Adrenal gland (tissue), 19 donors: ENCODE measurements at regions of chr14 and their contacts with region 1.

Region 1: DNA sequence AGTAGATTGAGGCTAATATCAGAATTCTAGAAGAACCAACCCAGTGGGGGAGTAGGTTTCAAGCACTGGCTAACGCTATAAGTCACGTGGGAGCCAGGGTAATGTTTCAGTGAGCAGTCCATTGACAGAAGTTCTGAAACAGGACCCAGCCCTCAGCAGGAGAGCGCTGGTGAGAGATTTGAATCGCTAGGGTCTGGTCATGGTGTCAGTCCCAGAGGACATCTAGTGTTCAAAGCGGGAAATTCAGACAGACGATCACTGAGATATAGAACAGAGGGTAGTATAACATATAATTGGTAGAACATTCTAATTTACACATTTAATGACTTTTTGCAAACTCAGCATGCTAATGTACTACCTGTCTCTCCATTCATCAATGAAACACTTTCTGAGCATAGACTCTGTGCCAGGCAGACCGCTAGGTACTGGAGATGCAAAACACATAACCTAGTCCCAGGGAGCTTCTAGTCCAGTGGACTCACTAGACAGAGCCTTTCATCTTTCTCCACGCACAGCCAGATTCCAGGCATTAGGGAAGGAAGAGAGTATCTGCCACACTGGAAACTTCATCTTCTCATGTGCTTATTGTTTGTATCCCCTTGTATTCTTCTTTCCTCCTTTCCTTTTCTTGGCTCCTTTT is 35.4 kb upstream of the RNASE3 start:
- DNase-seq: peak; percentile 64 to 82 (median 73)
- H3K4me3 ChIP-seq: no peak overlapping the region
- H3K27ac ChIP-seq: no peak overlapping the region
- H3K4me1 ChIP-seq: no peaks in the 10 kb centered on the region
- H3K27me3 ChIP-seq: no peaks in the 10 kb centered on the region
- CTCF ChIP-seq: peak; percentile 69 to 95 (median 83)
- POLR2A ChIP-seq: no peak

Region 2: GRCh38 chr14:20697273-20698017 is 158.3 kb before region 1 on chr14:
- intact Hi-C with region 1: loop called (anchors 2 to 5 kb)
- DNase-seq: peak; percentile 58 to 87 (median 73)
- H3K4me3 ChIP-seq: no peak overlapping the region
- H3K27ac ChIP-seq: no peak overlapping the region
- H3K4me1 ChIP-seq: no peaks in the 10 kb centered on the region
- H3K27me3 ChIP-seq: no peaks in the 10 kb centered on the region
- CTCF ChIP-seq: peak; percentile 51 to 92 (median 81)
- POLR2A ChIP-seq: no peak

Region 3: GRCh38 chr14:20904393-20905029 is 48.7 kb after region 1 on chr14:
- intact Hi-C with region 1: no loop called
- DNase-seq: peak in 1 of 7 donors; percentile 2
- H3K4me3 ChIP-seq: no peak overlapping the region
- H3K27ac ChIP-seq: no peak overlapping the region
- H3K4me1 ChIP-seq: no peaks in the 10 kb centered on the region
- H3K27me3 ChIP-seq: no peaks in the 10 kb centered on the region
- CTCF ChIP-seq: no peak
- POLR2A ChIP-seq: no peak

Region 4: DNA sequence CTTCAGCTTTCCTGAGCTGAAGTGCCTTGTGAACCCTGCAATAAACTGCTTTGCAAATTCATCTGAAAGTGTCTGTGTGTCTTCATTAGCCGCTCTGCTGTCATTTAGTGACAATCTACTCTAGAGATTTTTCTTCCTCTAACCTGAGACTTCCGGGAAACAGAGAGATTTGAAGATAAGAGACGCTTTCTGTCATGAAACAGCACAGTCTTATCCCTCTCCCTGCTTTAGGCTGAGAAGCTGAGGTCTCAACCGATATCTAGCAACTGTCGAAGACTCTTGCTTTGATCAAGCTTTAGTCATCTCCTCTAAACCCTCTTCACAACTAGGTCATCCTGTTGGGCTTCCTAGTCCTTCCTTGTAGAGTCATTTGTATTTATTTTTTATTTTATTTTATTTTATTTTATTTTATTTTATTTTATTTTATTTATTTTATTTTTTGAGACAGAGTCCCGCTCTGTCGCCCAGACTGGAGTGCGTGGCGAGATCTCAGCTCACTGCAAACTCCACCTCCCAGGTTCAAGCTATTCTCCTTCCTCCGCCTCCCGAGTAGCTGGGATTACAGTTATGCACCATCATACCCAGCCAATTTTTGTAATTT is 100.7 kb after region 1 on chr14:
- intact Hi-C with region 1: no loop called
- DNase-seq: no peak
- H3K4me3 ChIP-seq: no peak overlapping the region
- H3K27ac ChIP-seq: no peak overlapping the region
- H3K4me1 ChIP-seq: peaks cover 0 to 4% of the 10 kb centered on the region in 2 donors
- H3K27me3 ChIP-seq: no peaks in the 10 kb centered on the region
- CTCF ChIP-seq: no peak
- POLR2A ChIP-seq: no peak

Region 5: GRCh38 chr14:20970983-20971704 is 115.4 kb after region 1 on chr14:
- intact Hi-C with region 1: loop called (anchors 5 kb)
- DNase-seq: peak; percentile 76 to 94 (median 89)
- H3K4me3 ChIP-seq: peak overlapping the region; percentile 2 to 63 (median 48)
- H3K27ac ChIP-seq: peak overlapping the region; percentile 19 to 94 (median 89)
- H3K4me1 ChIP-seq: peaks cover 22 to 25% of the 10 kb centered on the region in 2 donors
- H3K27me3 ChIP-seq: no peaks in the 10 kb centered on the region
- CTCF ChIP-seq: peak; percentile 77 to 98 (median 85)
- POLR2A ChIP-seq: no peak